Cardiac septum (tissue), 1 donor: ENCODE measurements at regions of chr1 and their contacts with region 1.

Region 1: GRCh38 chr1:178344513-178345082 is 152.2 kb downstream of the CLEC20A start:
- DNase-seq: no peak

Region 2: GRCh38 chr1:178048426-178048825 is 296.2 kb before region 1 on chr1:
- intact Hi-C with region 1: no loop called
- DNase-seq: no peak

Region 3: GRCh38 chr1:178461676-178462075 is 117.1 kb after region 1 on chr1:
- intact Hi-C with region 1: loop called (anchors 5 kb)
- DNase-seq: no peak